CD8-positive, alpha-beta T cell (primary cell): ENCODE measurements at regions of chr15 and their contacts with region 1.

Region 1: GRCh38 chr15:50908210-50909009 is at the start of gene AP4E1:
- DNase-seq: peak; percentile 89 to 97 (median 95)
- ATAC-seq: peak; percentile 52
- H3K4me3 ChIP-seq: peak within 1 kb of the TSS; percentile 74 to 85
- H3K4me3 Mint-ChIP-seq: peak within 1 kb of the TSS; percentile 89
- H3K27ac ChIP-seq: peak within 1 kb of the TSS; percentile 85 to 95
- H3K27ac Mint-ChIP-seq: peak within 1 kb of the TSS; percentile 99
- H3K4me1 ChIP-seq: peaks cover 11% of the 10 kb centered on the region
- H3K4me1 Mint-ChIP-seq: peaks cover 35% of the 10 kb centered on the region
- H3K27me3 ChIP-seq: no peaks in the 10 kb centered on the region
- H3K27me3 Mint-ChIP-seq: no peaks in the 10 kb centered on the region
- CTCF ChIP-seq: peak; percentile 94
- total RNA-seq, gene AP4E1: 6.8 to 8.1 TPM

Region 2: GRCh38 chr15:49155110-49155833 is 1753.1 kb before region 1 on chr15 and contains the start of gene COPS2:
- CTCF ChIA-PET with region 1: no interaction called
- POLR2A ChIA-PET with region 1: no interaction called
- intact Hi-C with region 1: loop called (anchors 1 to 5 kb)
- DNase-seq: peak; percentile 84 to 98 (median 93)
- ATAC-seq: peak; percentile 94
- H3K4me3 ChIP-seq: peak within 1 kb of the TSS; percentile 83 to 90
- H3K4me3 Mint-ChIP-seq: peak within 1 kb of the TSS; percentile 99
- H3K27ac ChIP-seq: peak within 1 kb of the TSS; percentile 83 to 92
- H3K27ac Mint-ChIP-seq: peak within 1 kb of the TSS; percentile 98
- H3K4me1 ChIP-seq: peaks cover 36% of the 10 kb centered on the region
- H3K4me1 Mint-ChIP-seq: peaks cover 55% of the 10 kb centered on the region
- H3K27me3 ChIP-seq: no peaks in the 10 kb centered on the region
- H3K27me3 Mint-ChIP-seq: no peaks in the 10 kb centered on the region
- CTCF ChIP-seq: no peak
- total RNA-seq, gene COPS2: 147 to 159 TPM

Region 3: GRCh38 chr15:50424066-50424890 is 484.1 kb before region 1 on chr15 and contains the start of gene USP8:
- CTCF ChIA-PET with region 1: no interaction called
- POLR2A ChIA-PET with region 1: no interaction called
- intact Hi-C with region 1: loop called (anchors 1 to 2 kb)
- DNase-seq: peak; percentile 86 to 97 (median 92)
- ATAC-seq: peak; percentile 96
- H3K4me3 ChIP-seq: peak within 1 kb of the TSS; percentile 84 to 95
- H3K4me3 Mint-ChIP-seq: peak within 1 kb of the TSS; percentile 98
- H3K27ac ChIP-seq: peak within 1 kb of the TSS; percentile 91 to 96
- H3K27ac Mint-ChIP-seq: peak within 1 kb of the TSS; percentile 99
- H3K4me1 ChIP-seq: peaks cover 27% of the 10 kb centered on the region
- H3K4me1 Mint-ChIP-seq: peaks cover 42% of the 10 kb centered on the region
- H3K27me3 ChIP-seq: no peaks in the 10 kb centered on the region
- H3K27me3 Mint-ChIP-seq: no peaks in the 10 kb centered on the region
- CTCF ChIP-seq: no peak
- total RNA-seq, gene USP8: 59.5 to 61.5 TPM

Region 4: DNA sequence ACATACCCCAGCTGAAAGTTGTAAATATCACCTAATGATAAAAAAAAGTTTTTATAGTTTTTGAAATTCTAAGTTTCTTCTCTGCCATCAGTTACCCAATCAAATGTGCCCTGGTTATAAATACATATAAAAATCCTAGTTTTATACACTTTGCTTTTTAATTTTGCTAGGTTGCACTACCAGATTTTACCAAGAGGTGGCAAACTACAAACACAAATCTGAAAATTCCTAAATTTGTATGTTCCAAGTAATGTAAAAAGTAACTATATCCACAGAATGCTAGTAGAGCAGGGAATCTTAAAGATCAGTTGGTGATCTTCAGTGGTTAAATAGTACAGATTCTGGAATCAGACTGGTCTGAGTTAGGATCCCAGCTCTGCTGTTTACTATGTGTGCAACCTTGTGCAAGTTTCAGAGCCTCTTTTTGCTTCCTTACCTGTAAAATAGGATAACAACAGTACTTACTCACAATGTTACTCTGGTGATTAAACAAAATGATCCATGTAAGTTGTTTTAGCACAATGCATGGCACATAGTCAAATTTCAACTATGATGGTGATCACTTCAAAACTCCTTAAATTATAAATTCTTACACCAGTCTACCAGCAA is 232.8 kb before region 1 on chr15:
- CTCF ChIA-PET with region 1: interaction called, 25 read pairs
- POLR2A ChIA-PET with region 1: no interaction called
- intact Hi-C with region 1: loop called (anchors 1 kb)
- DNase-seq: peak in 2 of 9 experiments; percentile 47 to 57
- ATAC-seq: peak; percentile 56
- H3K4me3 ChIP-seq: no peak overlapping the region
- H3K4me3 Mint-ChIP-seq: no peak overlapping the region
- H3K27ac ChIP-seq: no peak overlapping the region
- H3K27ac Mint-ChIP-seq: peak overlapping the region; percentile 37
- H3K4me1 ChIP-seq: peaks cover 7% of the 10 kb centered on the region
- H3K4me1 Mint-ChIP-seq: peaks cover 49% of the 10 kb centered on the region
- H3K27me3 ChIP-seq: no peaks in the 10 kb centered on the region
- H3K27me3 Mint-ChIP-seq: no peaks in the 10 kb centered on the region
- CTCF ChIP-seq: peak; percentile 100

Region 5: DNA sequence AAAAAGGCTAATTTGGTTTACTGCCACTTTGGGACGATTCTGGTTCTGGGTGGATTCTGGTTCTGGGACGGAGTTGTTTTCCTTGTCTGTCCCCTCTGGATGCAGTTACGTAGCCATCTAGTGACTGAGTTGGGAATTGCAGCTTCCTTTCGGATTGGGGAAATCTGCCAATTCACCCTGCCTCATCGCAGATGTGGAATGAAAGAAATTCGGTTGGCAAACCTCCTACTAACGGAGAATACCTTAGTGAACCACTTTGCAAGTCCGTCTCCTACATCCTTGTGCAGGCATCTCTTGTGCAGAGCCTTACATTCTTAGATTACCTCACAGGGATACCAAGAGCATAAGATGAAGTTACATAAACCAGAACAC is 31.4 kb before region 1 on chr15:
- CTCF ChIA-PET with region 1: interaction called, 8 read pairs
- POLR2A ChIA-PET with region 1: interaction called, 6 read pairs
- intact Hi-C with region 1: loop called (anchors 1 to 2 kb)
- DNase-seq: peak; percentile 34 to 85 (median 67)
- ATAC-seq: peak; percentile 80
- H3K4me3 ChIP-seq: peak overlapping the region; percentile 10 to 40
- H3K4me3 Mint-ChIP-seq: peak overlapping the region; percentile 68
- H3K27ac ChIP-seq: no peak overlapping the region
- H3K27ac Mint-ChIP-seq: no peak overlapping the region
- H3K4me1 ChIP-seq: peaks cover 13% of the 10 kb centered on the region
- H3K4me1 Mint-ChIP-seq: peaks cover 6% of the 10 kb centered on the region
- H3K27me3 ChIP-seq: no peaks in the 10 kb centered on the region
- H3K27me3 Mint-ChIP-seq: peaks cover 3% of the 10 kb centered on the region
- CTCF ChIP-seq: peak; percentile 95

Region 6: GRCh38 chr15:50925281-50925680 is 16.9 kb after region 1 on chr15:
- CTCF ChIA-PET with region 1: no interaction called
- POLR2A ChIA-PET with region 1: no interaction called
- intact Hi-C with region 1: no loop called
- DNase-seq: no peak
- ATAC-seq: no peak
- H3K4me3 ChIP-seq: no peak overlapping the region
- H3K4me3 Mint-ChIP-seq: no peak overlapping the region
- H3K27ac ChIP-seq: no peak overlapping the region
- H3K27ac Mint-ChIP-seq: no peak overlapping the region
- H3K4me1 ChIP-seq: no peaks in the 10 kb centered on the region
- H3K4me1 Mint-ChIP-seq: peaks cover 10% of the 10 kb centered on the region
- H3K27me3 ChIP-seq: no peaks in the 10 kb centered on the region
- H3K27me3 Mint-ChIP-seq: no peaks in the 10 kb centered on the region
- CTCF ChIP-seq: no peak